Mammary epithelial cell (primary cell): ENCODE measurements at regions of chr1 and their contacts with region 1.

Region 1: GRCh38 chr1:224650290-224650689 is 34.2 kb downstream of the CNIH3 start:
- DNase-seq: no peak
- H3K4me3 ChIP-seq: no peak overlapping the region
- H3K27ac ChIP-seq: no peak overlapping the region
- H3K4me1 ChIP-seq: peaks cover 17% of the 10 kb centered on the region
- H3K27me3 ChIP-seq: no peaks in the 10 kb centered on the region
- CTCF ChIP-seq: no peak

Region 2: GRCh38 chr1:224662870-224663269 is 12.6 kb after region 1 on chr1:
- CTCF ChIA-PET with region 1: no interaction called
- dilution Hi-C with region 1: no loop called
- in situ Hi-C with region 1: no loop called
- intact Hi-C with region 1: no loop called
- DNase-seq: no peak
- H3K4me3 ChIP-seq: no peak overlapping the region
- H3K27ac ChIP-seq: no peak overlapping the region
- H3K4me1 ChIP-seq: no peaks in the 10 kb centered on the region
- H3K27me3 ChIP-seq: no peaks in the 10 kb centered on the region
- CTCF ChIP-seq: no peak

Region 3: GRCh38 chr1:224700915-224701531 is 50.7 kb after region 1 on chr1:
- CTCF ChIA-PET with region 1: interaction called, 19 read pairs
- dilution Hi-C with region 1: no loop called
- in situ Hi-C with region 1: no loop called
- intact Hi-C with region 1: no loop called
- DNase-seq: no peak
- H3K4me3 ChIP-seq: no peak overlapping the region
- H3K27ac ChIP-seq: no peak overlapping the region
- H3K4me1 ChIP-seq: no peaks in the 10 kb centered on the region
- H3K27me3 ChIP-seq: no peaks in the 10 kb centered on the region
- CTCF ChIP-seq: peak; percentile 35 to 55